WTC11 (cell line): ENCODE measurements at regions of chr3 and their contacts with region 1.

Region 1: GRCh38 chr3:49703443-49703927 is 14.1 kb downstream of the RNF123 start:
- DNase-seq: peak; percentile 75
- ATAC-seq: peak; percentile 91
- H3K4me3 Mint-ChIP-seq: no peak overlapping the region
- H3K27ac Mint-ChIP-seq: no peak overlapping the region; the same call in 1 of the 2 replicates
- H3K4me1 Mint-ChIP-seq: peaks cover 16% of the 10 kb centered on the region
- H3K27me3 Mint-ChIP-seq: no peaks in the 10 kb centered on the region
- CTCF ChIP-seq: peak; percentile 70

Region 2: GRCh38 chr3:49723628-49724551 is 20.4 kb after region 1 on chr3 and contains the start of gene GMPPB:
- CTCF ChIA-PET with region 1: interaction called, 45 read pairs
- POLR2A ChIA-PET with region 1: interaction called, 6 read pairs
- DNase-seq: peak; percentile 97
- ATAC-seq: peak; percentile 79
- H3K4me3 Mint-ChIP-seq: peak within 1 kb of the TSS; percentile 91
- H3K27ac Mint-ChIP-seq: peak within 1 kb of the TSS; percentile 98
- H3K4me1 Mint-ChIP-seq: peaks cover 11% of the 10 kb centered on the region
- H3K27me3 Mint-ChIP-seq: no peaks in the 10 kb centered on the region
- CTCF ChIP-seq: no peak
- total RNA-seq, gene GMPPB: 23.7 to 28.7 TPM (median 28.0 TPM) in 3 replicates

Region 3: DNA sequence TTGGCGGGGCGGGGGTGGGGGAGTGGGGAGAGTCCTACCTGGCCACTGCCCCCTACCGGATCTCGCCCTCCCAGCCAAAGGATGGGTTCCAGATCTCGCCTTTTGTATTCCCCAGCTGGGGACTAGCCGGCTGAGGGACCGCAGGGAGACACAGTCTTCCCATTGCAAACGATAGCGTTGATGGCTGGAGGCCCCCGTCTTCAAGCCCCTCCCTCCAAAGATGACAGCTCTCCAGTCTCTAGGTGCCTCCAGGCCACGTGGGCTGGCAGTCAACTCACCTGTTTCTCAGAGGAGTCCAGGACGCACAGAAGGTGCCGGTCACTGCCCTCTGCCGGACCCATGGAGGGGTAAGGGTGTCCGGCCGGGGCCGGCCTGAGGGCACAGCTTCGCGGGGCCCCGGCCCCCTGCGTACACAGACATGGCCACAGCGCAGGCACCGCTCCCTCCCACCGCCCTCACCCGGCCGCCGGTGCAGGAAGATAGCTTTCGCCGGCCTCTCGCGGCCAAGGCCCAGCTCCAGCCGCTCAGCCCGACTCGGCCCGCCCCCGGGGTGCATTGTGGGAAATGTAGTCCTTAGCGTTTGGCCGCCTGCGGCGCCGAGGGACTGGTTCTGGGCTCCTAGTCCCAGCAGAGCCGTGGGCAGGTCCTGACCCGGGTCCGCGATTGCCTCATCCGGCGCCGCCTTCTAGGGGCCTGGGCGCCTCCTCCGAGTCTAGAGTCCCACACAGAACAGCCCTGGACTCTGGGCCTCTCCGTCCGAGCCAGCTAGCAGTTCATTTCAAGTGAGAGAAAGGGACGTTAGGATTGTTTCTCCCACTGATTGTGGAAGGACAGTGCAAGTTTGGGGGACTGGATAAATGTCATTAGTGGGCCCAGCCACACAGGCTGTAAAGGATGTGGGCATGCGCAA is 226.1 kb after region 1 on chr3 and contains the start of gene MON1A:
- CTCF ChIA-PET with region 1: interaction called, 11 read pairs
- POLR2A ChIA-PET with region 1: no interaction called
- DNase-seq: peak; percentile 99
- ATAC-seq: peak; percentile 87
- H3K4me3 Mint-ChIP-seq: peak within 1 kb of the TSS; percentile 90
- H3K27ac Mint-ChIP-seq: peak within 1 kb of the TSS; percentile 98
- H3K4me1 Mint-ChIP-seq: peaks cover 25% of the 10 kb centered on the region
- H3K27me3 Mint-ChIP-seq: no peaks in the 10 kb centered on the region
- CTCF ChIP-seq: no peak
- total RNA-seq, gene MON1A: 6.6 to 8.6 TPM (median 7.0 TPM) in 3 replicates